ENCODE measurements at regions of chr6 and their contacts with region 1.

Region 1: GRCh38 chr6:41334482-41335040 is 847 bp upstream of the NCR2 start:
- DNase-seq: no peak
- H3K4me3 Mint-ChIP-seq: no peak overlapping the region
- H3K27ac Mint-ChIP-seq: peak overlapping the region; percentile 47
- H3K4me1 Mint-ChIP-seq: peaks cover 31% of the 10 kb centered on the region
- H3K27me3 Mint-ChIP-seq: peaks cover 10% of the 10 kb centered on the region

Region 2: DNA sequence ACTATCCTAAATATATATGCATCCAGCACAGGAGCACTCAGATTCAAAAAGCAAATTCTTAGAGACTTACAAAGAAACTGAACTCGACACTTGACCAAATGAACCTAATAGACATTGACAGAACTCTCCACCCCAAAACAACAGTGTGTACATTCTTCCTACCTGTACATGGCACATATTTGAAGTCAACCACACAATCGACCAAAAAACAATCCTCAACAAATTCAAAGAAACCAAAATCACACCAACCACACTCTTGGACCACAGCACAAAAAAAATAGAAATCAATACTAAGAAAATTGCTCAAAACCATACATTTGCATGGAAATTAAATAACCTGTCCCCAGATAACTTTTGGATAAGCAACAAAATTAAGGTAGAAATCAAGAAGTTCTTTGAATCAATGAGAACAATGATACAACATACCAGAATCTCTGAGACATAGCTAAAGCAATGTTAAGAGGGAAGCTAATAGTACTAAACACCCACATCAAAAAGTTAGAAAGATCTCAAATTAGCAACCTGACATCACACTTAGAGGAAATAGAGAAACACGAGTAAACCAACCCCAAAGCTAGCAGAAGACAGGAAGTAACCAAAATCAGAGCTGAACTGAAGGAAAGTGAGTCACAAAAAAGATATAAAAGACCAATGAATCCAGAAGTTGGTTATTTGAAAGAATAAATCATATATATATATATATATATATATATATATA is 35.6 kb before region 1 on chr6:
- intact Hi-C with region 1: loop called (anchors 1 kb)
- DNase-seq: no peak
- H3K4me3 Mint-ChIP-seq: peak overlapping the region; percentile 62
- H3K27ac Mint-ChIP-seq: peak overlapping the region; percentile 73
- H3K4me1 Mint-ChIP-seq: peaks cover 58% of the 10 kb centered on the region
- H3K27me3 Mint-ChIP-seq: peaks cover 6% of the 10 kb centered on the region

Measured in activated T-helper 1 cell treated with anti-CD3 and anti-CD28 coated beads, Interleukin-12 subunit alpha, Interleukin-12 subunit beta, Interleukin-2, Interleukin-4 antibody, amounts not matched to agents 30 ng/mL and 10 ng/mL and 1 ng/mL, durations not matched to agents 14 hours and 24 hours and 36 hours (primary cell).